ENCODE measurements at regions of chr4 and their contacts with region 1.

Region 1: GRCh38 chr4:107896158-107897045 is 34.9 kb upstream of the CYP2U1 start:
- DNase-seq: peak; percentile 92
- ATAC-seq: peak; percentile 94
- H3K4me3 ChIP-seq: peak overlapping the region; percentile 36
- H3K27ac ChIP-seq: peak overlapping the region; percentile 82
- H3K4me1 ChIP-seq: peaks cover 33% of the 10 kb centered on the region
- H3K27me3 ChIP-seq: no peaks in the 10 kb centered on the region
- CTCF ChIP-seq: no peak

Region 2: GRCh38 chr4:107719922-107720722 is 176.3 kb before region 1 on chr4 and contains the start of gene PAPSS1:
- CTCF ChIA-PET with region 1: no interaction called
- POLR2A ChIA-PET with region 1: no interaction called
- intact Hi-C with region 1: loop called (anchors 1 kb)
- DNase-seq: peak; percentile 96
- ATAC-seq: peak; percentile 90
- H3K4me3 ChIP-seq: peak within 1 kb of the TSS; percentile 93
- H3K27ac ChIP-seq: peak within 1 kb of the TSS; percentile 82
- H3K4me1 ChIP-seq: peaks cover 24% of the 10 kb centered on the region
- H3K27me3 ChIP-seq: no peaks in the 10 kb centered on the region
- CTCF ChIP-seq: no peak
- total RNA-seq, gene PAPSS1: 24.5 and 28.0 TPM in 2 replicates

Region 3: DNA sequence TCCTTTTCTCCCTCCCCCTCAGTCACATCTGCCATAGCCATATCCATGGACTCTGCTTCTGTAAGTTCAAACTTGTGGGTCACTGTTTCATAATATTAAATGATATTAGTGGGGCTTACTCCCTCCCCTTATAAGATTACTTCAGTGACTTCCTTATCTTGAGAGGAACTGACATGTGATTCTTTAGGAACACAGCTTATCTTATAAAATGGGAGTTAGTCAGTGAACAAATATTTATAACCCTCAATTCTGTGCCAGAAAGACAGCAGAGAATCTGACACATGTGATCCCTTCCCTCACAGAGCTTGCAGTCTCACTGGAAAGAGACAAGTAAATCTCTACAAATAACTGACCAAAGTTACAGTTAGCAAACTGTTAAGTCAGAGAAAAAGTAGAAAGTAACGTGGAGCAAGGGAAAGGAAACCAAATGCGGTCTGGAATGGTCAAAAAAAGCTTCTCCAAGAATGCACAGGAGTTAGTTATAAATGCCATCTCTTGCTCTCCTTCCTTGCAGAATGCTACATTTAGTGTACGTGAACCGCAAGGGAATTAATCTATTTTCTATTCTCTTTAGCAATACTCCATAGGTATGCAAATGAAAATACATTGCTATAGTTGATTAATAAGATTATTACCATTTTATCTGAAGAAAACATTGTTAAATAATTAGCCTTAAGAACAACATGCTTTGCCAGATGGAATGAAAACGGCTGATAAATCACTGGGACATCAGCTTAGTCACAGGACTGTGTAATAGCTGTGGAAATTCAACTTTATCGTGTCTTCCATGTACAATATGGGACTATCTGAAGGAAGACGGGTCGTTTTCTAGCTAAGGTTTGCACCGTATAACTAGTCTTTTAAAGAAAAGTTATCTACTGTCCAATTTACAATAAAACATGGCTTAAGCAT is 42.7 kb before region 1 on chr4:
- CTCF ChIA-PET with region 1: no interaction called
- POLR2A ChIA-PET with region 1: no interaction called
- intact Hi-C with region 1: loop called (anchors 1 kb)
- DNase-seq: peak; percentile 60
- ATAC-seq: peak; percentile 69
- H3K4me3 ChIP-seq: peak overlapping the region; percentile 22; the same call in 1 of the 2 replicates
- H3K27ac ChIP-seq: peak overlapping the region; percentile 51
- H3K4me1 ChIP-seq: peaks cover 21% of the 10 kb centered on the region
- H3K27me3 ChIP-seq: no peaks in the 10 kb centered on the region
- CTCF ChIP-seq: no peak

Region 4: GRCh38 chr4:107863850-107864371 is 32.5 kb before region 1 on chr4:
- CTCF ChIA-PET with region 1: no interaction called
- POLR2A ChIA-PET with region 1: no interaction called
- intact Hi-C with region 1: loop called (anchors 1 kb)
- DNase-seq: peak; percentile 72
- ATAC-seq: peak; percentile 66
- H3K4me3 ChIP-seq: no peak overlapping the region
- H3K27ac ChIP-seq: peak overlapping the region; percentile 77
- H3K4me1 ChIP-seq: peaks cover 29% of the 10 kb centered on the region
- H3K27me3 ChIP-seq: no peaks in the 10 kb centered on the region
- CTCF ChIP-seq: no peak

Region 5: DNA sequence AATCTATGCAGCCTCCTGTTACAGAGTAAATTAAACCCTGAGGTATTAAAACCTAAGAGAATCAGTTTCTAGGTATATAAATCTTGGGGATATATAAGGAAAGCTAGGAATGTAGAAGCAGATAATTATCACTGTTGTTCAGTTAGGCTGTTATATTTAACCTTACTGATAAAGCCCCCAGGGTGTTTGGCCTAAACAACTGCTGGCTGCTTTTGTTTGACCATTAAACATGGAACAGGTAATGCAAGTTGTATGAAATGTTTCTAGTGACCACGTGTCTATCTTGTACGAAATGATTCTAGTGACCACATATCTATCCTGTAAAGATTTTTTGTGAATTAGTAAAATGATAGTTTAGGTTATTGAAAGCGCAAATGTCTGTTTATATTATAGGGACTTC is 19.1 kb before region 1 on chr4:
- CTCF ChIA-PET with region 1: no interaction called
- POLR2A ChIA-PET with region 1: interaction called, 11 read pairs
- intact Hi-C with region 1: no loop called
- DNase-seq: peak; percentile 52
- ATAC-seq: no peak
- H3K4me3 ChIP-seq: no peak overlapping the region
- H3K27ac ChIP-seq: no peak overlapping the region
- H3K4me1 ChIP-seq: peaks cover 16% of the 10 kb centered on the region
- H3K27me3 ChIP-seq: no peaks in the 10 kb centered on the region
- CTCF ChIP-seq: no peak

Measured in PC-3 (cell line).